HCT116 (cell line): ENCODE measurements at regions of chr9 and their contacts with region 1.

Region 1: DNA sequence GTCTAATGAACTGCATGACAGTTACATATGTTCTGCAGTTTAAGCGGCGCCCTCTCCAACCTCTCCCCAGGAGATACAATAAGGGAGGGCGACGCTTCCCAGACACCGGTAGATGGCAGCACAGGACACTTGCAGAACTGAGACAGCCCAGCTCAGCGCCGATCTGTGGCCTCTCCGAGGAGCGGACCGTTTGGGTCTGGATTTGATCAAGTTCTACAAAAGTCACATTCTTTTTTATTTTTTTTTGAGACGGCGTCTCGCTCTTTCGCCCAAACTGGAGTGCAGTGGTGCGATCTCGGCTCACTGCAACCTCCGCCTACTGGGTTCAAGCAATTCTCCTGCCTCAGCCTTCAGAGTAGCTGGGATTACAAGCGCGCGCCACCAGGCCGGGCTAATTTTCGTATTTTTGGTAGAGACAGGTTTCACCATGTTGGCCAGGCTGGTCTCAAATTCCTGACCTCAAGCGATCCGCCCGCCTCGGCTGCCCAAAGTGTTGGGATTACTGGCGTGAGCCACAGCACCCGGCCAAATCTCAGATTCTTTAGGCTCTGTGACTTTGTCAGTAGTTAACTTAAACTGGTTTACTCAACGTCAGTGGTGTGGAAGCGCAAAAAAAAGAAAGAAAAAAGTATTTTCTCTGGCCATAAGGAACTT is 1.4 kb upstream of the ATOSB start:
- DNase-seq: peak; percentile 86
- ATAC-seq: peak; percentile 69
- H3K4me3 ChIP-seq: peak overlapping the region; percentile 58 to 68
- H3K27ac ChIP-seq: no peak overlapping the region
- H3K4me1 ChIP-seq: peaks cover 32 to 50% of the 10 kb centered on the region in 2 experiments
- H3K27me3 ChIP-seq: no peaks in the 10 kb centered on the region
- CTCF ChIP-seq: peak in 2 of 3 experiments; percentile 92 to 95; a peak in 4 of 6 replicates
- POLR2A ChIP-seq: no peak
- RAD21 ChIP-seq: no peak

Region 2: DNA sequence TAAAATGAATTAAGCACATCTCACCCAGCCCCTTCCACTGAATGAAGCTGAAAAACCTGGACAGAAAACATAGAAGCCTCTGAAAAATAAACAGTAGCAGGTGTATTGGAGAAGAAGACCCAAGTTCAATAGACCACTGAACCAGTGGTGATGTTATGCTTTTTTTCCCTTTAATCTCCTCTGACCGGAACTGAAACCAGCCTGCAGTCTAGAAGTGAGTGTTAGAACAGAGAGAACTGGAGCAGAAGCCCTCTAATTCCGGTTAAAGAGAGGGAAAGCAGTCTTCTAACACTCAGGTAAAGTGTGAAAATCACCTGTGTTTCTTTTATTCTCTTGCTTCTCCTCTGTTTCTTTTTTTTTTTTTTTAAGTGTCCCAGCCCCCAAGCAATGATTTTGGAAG is 323.6 kb before region 1 on chr9:
- CTCF ChIA-PET with region 1: no interaction called
- POLR2A ChIA-PET with region 1: no interaction called
- RAD21 ChIA-PET with region 1: no interaction called
- intact Hi-C with region 1: no loop called
- DNase-seq: no peak
- ATAC-seq: no peak
- H3K4me3 ChIP-seq: no peak overlapping the region
- H3K27ac ChIP-seq: no peak overlapping the region
- H3K4me1 ChIP-seq: no peaks in the 10 kb centered on the region
- H3K27me3 ChIP-seq: peaks cover 35% of the 10 kb centered on the region
- CTCF ChIP-seq: no peak
- POLR2A ChIP-seq: no peak
- RAD21 ChIP-seq: no peak

Region 3: DNA sequence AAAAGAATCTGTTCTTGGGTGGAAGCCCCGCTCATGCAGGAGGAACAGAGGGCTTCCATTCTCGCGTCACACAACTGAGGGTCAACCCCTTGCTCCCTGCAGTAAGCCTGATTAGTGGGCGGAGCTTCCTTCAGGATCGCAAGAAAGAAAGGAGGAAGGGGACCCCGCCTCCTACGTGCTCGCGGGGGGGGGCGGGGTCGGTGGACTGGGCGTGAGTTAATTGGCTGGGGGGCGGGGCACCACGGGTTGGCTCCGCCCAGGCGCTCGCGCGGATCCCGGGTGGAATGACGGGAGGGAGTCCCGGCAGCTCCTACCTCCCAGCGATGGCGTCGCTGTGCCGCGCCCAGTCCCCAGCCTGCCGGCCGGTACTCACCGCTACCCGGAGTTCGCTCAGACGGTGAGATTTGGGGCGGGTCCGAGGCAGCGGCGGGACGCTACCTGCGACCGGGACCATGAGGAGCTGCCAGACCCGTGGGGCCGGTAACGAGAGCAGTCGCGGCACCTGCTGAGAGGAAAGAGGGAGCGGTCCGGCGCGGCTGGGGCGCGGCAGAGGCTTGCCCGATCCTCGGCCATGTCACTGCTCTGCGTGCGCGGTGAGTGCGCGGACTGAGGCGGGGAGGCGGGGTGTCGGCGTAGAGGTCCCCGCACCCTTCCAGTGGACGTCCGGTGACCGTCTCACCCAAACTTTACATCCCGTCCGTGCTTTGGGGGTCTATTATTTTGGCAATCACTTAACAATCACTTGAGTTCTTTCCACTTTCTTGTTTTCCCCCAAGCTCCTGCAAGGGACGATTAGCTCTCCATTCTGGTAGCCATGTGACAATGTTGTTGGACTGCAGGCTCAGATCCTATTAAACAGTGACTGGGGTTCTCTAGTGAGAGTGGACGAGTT is 44.9 kb after region 1 on chr9 and contains the start of gene UNC13B:
- CTCF ChIA-PET with region 1: interaction called, 6 read pairs
- POLR2A ChIA-PET with region 1: interaction called, 10 read pairs
- RAD21 ChIA-PET with region 1: no interaction called
- intact Hi-C with region 1: loop called (anchors 5 kb)
- DNase-seq: peak; percentile 82
- ATAC-seq: peak; percentile 95
- H3K4me3 ChIP-seq: peak within 1 kb of the TSS; percentile 88 to 89
- H3K27ac ChIP-seq: peak within 1 kb of the TSS; percentile 71
- H3K4me1 ChIP-seq: peaks cover 3 to 13% of the 10 kb centered on the region in 2 experiments; a peak in 3 of 4 replicates
- H3K27me3 ChIP-seq: no peaks in the 10 kb centered on the region
- CTCF ChIP-seq: no peak
- POLR2A ChIP-seq: peak; percentile 74
- RAD21 ChIP-seq: no peak
- total RNA-seq, gene UNC13B: 17.6 TPM

Region 4: DNA sequence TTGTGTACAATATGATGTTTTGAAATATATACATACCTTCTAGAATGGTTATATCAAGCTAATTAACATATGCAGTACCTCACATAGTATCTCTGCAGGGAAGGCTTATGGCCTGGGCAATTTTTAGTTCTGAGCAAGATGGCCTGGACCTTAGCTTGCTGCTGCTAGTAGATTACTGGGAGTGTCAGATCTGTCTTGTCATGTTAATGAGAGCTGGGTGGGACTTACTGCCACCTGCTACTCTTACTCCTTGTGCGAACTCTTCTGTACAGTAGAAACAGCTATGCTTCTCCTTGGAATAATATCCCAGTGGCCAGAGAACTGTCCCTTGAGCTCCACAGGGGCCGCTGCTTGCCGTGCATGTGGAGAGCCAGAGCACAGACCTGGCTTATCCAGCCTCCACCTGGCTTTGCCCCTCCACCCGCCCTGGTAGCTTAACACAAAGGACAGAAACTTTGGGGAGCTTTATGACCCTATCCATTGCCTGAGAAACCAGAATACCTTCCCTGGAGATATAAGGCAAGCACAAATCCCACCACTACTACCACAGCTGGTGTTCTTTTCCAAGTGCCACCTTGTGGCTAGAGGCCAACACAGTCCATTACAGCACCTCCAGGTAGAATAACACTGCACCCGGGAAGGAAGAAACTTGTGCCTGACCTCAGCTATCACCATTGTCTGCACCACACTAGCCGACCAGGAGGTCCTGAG is 298.5 kb after region 1 on chr9:
- CTCF ChIA-PET with region 1: interaction called, 8 read pairs
- POLR2A ChIA-PET with region 1: no interaction called
- RAD21 ChIA-PET with region 1: no interaction called
- intact Hi-C with region 1: loop called (anchors 2 kb)
- DNase-seq: no peak
- ATAC-seq: peak; percentile 79
- H3K4me3 ChIP-seq: no peak overlapping the region
- H3K27ac ChIP-seq: no peak overlapping the region
- H3K4me1 ChIP-seq: no peaks in the 10 kb centered on the region
- H3K27me3 ChIP-seq: no peaks in the 10 kb centered on the region; the same call in 1 of the 2 replicates
- CTCF ChIP-seq: peak in 2 of 3 experiments; percentile 24 to 45; a peak in 3 of 6 replicates
- POLR2A ChIP-seq: no peak
- RAD21 ChIP-seq: no peak

Region 5: GRCh38 chr9:35481347-35481975 is 364.4 kb after region 1 on chr9:
- CTCF ChIA-PET with region 1: interaction called, 19 read pairs
- POLR2A ChIA-PET with region 1: no interaction called
- RAD21 ChIA-PET with region 1: interaction called in 1 of 2 experiments, 4 read pairs
- intact Hi-C with region 1: loop called (anchors 1 kb)
- DNase-seq: peak; percentile 54
- ATAC-seq: peak; percentile 64
- H3K4me3 ChIP-seq: no peak overlapping the region
- H3K27ac ChIP-seq: no peak overlapping the region
- H3K4me1 ChIP-seq: no peaks in the 10 kb centered on the region
- H3K27me3 ChIP-seq: no peaks in the 10 kb centered on the region
- CTCF ChIP-seq: peak; percentile 78 to 93 (median 87)
- POLR2A ChIP-seq: no peak
- RAD21 ChIP-seq: peak; percentile 94

Region 6: DNA sequence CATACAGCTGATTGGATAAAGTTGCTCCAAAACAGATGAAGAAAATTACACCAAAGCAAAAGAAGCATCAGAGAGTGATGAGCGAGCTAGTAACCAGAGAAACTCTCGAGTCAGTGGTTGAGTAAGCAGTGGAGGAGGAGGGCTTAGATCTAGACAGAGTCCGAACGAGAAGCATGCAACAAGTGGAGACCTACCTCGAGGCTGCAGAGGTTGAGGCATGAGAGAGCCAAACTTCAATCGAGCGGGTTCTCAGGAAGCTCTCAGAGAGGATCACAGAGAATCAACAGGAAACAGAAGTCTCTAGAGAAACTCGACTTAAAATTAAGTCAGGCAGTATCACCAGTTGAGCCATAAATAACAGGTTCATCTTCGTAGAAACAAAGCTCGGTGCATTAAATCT is 379.0 kb after region 1 on chr9:
- CTCF ChIA-PET with region 1: no interaction called
- POLR2A ChIA-PET with region 1: no interaction called
- RAD21 ChIA-PET with region 1: no interaction called
- intact Hi-C with region 1: no loop called
- DNase-seq: no peak
- ATAC-seq: no peak
- H3K4me3 ChIP-seq: no peak overlapping the region
- H3K27ac ChIP-seq: no peak overlapping the region
- H3K4me1 ChIP-seq: peaks cover 13 to 15% of the 10 kb centered on the region in 2 experiments
- H3K27me3 ChIP-seq: no peaks in the 10 kb centered on the region
- CTCF ChIP-seq: no peak
- POLR2A ChIP-seq: no peak
- RAD21 ChIP-seq: no peak

Region 7: DNA sequence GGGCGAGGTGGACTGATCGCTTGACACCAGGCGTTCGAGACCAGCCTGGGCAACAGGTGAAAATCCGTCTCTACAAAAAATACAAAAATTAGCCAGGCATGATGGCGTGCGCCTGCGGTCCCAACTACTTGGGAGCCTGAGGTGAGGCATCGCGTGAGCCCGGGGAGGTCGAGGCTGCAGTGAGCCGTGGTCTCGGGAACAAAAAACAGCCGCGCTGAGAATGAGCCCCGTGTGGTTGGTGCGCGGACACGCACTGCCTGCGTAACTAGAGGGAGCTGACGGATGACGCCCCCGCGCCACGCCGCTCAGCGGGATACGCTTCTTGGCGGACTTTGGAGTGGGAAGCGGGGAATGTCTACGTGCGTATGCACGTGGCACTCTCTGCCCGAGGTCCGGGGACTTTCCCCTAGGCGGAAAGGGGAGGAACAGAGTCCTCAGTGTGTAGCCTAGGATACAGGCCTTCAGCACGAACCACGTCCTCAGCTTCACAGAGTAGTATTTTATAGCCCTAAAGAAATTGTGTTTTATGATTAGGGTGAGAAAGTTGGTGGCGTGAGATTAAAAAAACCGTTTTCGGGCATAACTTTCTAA is 540.6 kb after region 1 on chr9 and contains the start of gene RMRP:
- CTCF ChIA-PET with region 1: no interaction called
- POLR2A ChIA-PET with region 1: no interaction called
- RAD21 ChIA-PET with region 1: no interaction called
- intact Hi-C with region 1: loop called (anchors 10 kb)
- DNase-seq: peak; percentile 99
- ATAC-seq: peak; percentile 89
- H3K4me3 ChIP-seq: peak within 1 kb of the TSS; percentile 68 to 75
- H3K27ac ChIP-seq: peak within 1 kb of the TSS; percentile 85
- H3K4me1 ChIP-seq: peaks cover 10 to 34% of the 10 kb centered on the region in 2 experiments; a peak in 3 of 4 replicates
- H3K27me3 ChIP-seq: no peaks in the 10 kb centered on the region
- CTCF ChIP-seq: no peak
- POLR2A ChIP-seq: no peak
- RAD21 ChIP-seq: no peak
- total RNA-seq, gene RMRP: 30,969 TPM